Heart left ventricle (tissue), 16 donors: ENCODE measurements at regions of chr7 and their contacts with region 1.

Region 1: DNA sequence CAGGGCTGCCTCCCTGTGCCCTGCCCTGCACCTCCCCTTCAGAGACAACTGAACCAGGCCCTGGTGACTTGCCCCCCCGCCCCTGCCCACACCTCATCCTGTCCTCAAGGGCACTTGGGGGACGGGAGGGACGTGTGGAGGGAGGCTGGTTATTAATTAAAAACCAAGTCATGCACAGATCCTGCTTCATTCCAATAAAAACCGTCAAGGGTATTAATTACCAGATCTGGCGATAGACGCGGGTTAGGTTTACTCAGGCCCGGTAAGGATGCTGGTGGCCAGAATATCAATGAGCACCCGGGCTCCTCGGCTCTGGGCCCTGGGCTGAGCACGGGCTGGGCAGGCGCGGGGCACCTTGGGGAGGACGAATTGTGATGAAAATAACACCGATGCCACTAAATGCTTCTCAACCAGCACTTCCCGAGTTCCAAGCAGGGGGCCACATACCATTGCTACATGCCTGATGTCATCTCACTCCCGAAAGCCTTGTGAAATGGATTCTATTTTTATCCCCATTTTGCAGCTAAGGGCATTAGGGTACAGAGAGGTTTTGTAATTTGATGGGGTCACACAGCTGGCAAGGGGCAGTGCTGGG is 24.5 kb upstream of the GTF2IRD1 start:
- DNase-seq: peak in 2 of 5 donors; percentile 14 to 16
- ATAC-seq: peak in 2 of 4 donors; percentile 21 to 28
- H3K4me3 ChIP-seq: no peak overlapping the region
- H3K27ac ChIP-seq: no peak overlapping the region
- H3K4me1 ChIP-seq: peaks cover 0 to 8% (median 0%) of the 10 kb centered on the region in 12 donors
- H3K27me3 ChIP-seq: no peaks in the 10 kb centered on the region
- CTCF ChIP-seq: no peak
- POLR2A ChIP-seq: no peak

Region 2: DNA sequence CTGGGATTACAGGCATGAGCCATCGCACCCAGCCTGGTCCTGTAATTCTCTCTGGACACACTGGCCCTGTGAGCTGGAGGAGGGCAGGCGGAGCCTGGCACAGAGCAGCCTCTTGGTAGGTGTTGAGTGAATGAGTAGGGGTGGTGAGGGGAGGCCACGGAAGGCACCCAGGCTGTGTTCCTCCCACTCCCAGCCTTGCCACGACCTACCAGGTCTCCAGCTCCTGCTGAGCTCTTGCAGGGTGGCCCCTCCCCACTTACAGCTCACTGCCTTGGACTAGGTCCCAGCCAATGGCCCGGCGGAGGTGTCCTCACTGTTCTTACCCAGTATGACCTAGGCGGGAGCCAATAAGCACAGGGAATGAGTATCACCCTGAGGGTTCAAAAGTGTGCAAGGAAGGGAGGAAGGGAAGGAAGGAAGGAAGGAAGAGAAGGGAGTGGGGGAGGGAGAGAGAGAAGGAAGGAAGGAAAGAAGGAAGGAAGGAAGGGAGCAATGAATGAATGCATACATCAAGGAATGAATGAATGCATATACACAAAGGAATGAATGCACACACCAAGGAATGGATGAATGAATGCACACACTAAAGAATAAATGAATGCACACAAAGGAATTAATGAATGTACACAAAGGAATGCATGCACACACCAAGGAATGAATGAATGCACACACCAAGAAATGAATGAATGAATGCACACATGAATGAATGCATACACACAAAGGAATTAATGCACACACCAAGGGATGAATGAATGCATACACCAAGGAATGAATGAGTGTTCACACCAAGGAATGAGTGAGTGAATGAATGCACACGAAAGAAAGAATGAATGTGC is 70.0 kb after region 1 on chr7:
- intact Hi-C with region 1: no loop called
- DNase-seq: peak in 4 of 5 donors; percentile 41 to 75 (median 72)
- ATAC-seq: peak in 3 of 4 donors; percentile 57 to 86 (median 65)
- H3K4me3 ChIP-seq: no peak overlapping the region
- H3K27ac ChIP-seq: peak overlapping the region in 1 of 12 donors; percentile 63
- H3K4me1 ChIP-seq: peaks cover 0 to 36% (median 13%) of the 10 kb centered on the region in 12 donors
- H3K27me3 ChIP-seq: no peaks in the 10 kb centered on the region
- CTCF ChIP-seq: no peak
- POLR2A ChIP-seq: no peak

Region 3: GRCh38 chr7:74569501-74570075 is 140.3 kb after region 1 on chr7:
- intact Hi-C with region 1: loop called in 1 of 10 experiments (anchors 10 kb)
- DNase-seq: no peak
- ATAC-seq: no peak
- H3K4me3 ChIP-seq: no peak overlapping the region
- H3K27ac ChIP-seq: no peak overlapping the region
- H3K4me1 ChIP-seq: peaks cover 0 to 6% (median 0%) of the 10 kb centered on the region in 12 donors
- H3K27me3 ChIP-seq: no peaks in the 10 kb centered on the region
- CTCF ChIP-seq: no peak
- POLR2A ChIP-seq: no peak

Region 4: GRCh38 chr7:75024922-75025321 is 595.7 kb after region 1 on chr7:
- intact Hi-C with region 1: loop called in 2 of 10 experiments (anchors 5 to 10 kb)
- DNase-seq: no peak
- ATAC-seq: no peak
- H3K4me3 ChIP-seq: no peak overlapping the region
- H3K27ac ChIP-seq: no peak overlapping the region
- H3K4me1 ChIP-seq: no peaks in the 10 kb centered on the region
- H3K27me3 ChIP-seq: no peaks in the 10 kb centered on the region
- CTCF ChIP-seq: no peak
- POLR2A ChIP-seq: no peak

Region 5: GRCh38 chr7:75033050-75033449 is 603.8 kb after region 1 on chr7:
- intact Hi-C with region 1: loop called in 2 of 10 experiments (anchors 5 to 10 kb)
- DNase-seq: no peak
- ATAC-seq: no peak
- H3K4me3 ChIP-seq: no peak overlapping the region
- H3K27ac ChIP-seq: no peak overlapping the region
- H3K4me1 ChIP-seq: no peaks in the 10 kb centered on the region
- H3K27me3 ChIP-seq: no peaks in the 10 kb centered on the region
- CTCF ChIP-seq: peak in 1 of 12 donors; percentile 10
- POLR2A ChIP-seq: no peak